ENCODE measurements at regions of chr1 and their contacts with region 1.

Region 1: DNA sequence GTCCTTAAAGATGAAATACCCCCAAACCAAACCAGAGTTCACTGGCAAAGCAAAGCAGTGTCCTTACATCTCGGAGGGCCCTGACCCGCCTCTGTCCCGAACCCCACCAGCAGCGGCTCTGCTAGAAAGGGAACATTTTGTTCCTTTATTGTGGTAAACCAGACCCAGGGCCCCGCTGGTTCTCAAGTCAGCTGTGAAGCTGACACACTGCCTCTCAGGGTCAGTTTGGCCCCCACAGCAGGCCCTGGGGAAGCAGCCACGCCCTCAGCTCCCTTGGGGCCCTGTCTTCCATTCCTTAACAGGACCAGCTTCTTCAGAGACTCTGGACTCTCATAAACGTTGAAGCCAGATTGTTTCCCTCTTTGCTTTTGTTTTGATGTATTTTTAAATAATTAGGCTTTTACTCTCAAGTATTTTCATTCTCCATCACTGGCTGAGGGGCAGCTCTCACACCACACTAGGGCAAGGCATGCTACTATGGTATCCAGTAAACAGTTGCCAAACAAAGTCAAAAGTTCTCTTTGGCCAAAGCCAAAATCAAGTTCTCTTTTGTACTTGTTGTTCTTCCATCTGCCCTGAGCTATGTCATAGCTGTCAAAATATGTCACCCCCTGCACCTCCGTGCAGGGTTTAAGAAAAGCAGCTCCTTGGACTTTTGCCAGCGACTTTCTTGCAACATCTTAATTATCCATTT is 61.1 kb upstream of the ANGPTL1 start:
- DNase-seq: peak in 1 of 2 donors; percentile 96
- H3K4me3 ChIP-seq: no peak overlapping the region
- H3K27ac ChIP-seq: peak overlapping the region; percentile 74
- H3K4me1 ChIP-seq: peaks cover 40% of the 10 kb centered on the region
- H3K27me3 ChIP-seq: no peaks in the 10 kb centered on the region
- CTCF ChIP-seq: no peak
- POLR2A ChIP-seq: no peak

Region 2: GRCh38 chr1:178093205-178093957 is 838.6 kb before region 1 on chr1:
- intact Hi-C with region 1: loop called (anchors 10 kb)
- DNase-seq: peak in 1 of 2 donors; percentile 91
- H3K4me3 ChIP-seq: peak overlapping the region; percentile 59 to 95
- H3K27ac ChIP-seq: peak overlapping the region; percentile 82
- H3K4me1 ChIP-seq: peaks cover 20% of the 10 kb centered on the region
- H3K27me3 ChIP-seq: no peaks in the 10 kb centered on the region
- CTCF ChIP-seq: no peak
- POLR2A ChIP-seq: no peak